Right ventricle myocardium inferior (tissue), 1 donor: ENCODE measurements at regions of chr3 and their contacts with region 1.

Region 1: DNA sequence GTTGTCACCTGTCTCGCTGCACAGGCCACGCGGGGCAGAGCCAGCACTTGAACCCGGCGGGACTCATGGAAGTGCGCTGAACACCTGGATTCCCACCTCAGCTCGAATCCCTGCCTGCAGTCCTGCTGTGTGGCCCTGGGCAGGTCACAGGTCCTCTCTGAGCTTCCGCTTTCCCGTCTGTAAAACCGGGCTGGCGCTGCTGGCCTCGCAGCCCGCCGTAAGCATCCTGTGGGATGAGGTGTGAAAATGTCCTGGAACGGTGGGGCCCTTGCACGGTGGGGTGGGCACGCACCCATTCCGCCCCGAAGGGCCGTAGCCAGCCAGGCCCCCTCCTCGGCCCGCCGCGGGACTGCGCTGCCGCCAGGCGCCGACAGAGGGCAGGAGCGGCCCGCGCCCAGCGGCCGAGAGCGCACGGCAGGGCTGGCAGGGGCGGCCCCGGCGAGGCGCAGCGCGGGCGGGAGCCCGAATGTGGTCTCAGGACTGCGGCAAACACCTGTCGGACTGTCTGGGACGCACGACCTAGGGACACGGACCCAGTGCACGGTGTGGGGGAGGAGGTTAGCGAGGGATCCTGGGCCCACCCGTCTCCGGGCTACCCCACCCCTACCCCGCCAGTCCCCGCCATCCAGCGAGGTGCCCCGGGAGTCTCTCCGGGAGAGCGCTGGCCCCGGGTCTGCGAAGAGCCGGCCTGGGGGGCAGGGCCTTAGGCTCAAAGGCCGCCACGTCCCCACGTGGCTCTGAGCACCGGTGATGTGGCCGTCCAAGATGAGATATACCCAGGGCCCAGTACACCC is 40.4 kb downstream of the DNAJB8 start:
- DNase-seq: peak; percentile 79
- ATAC-seq: peak; percentile 86

Region 2: GRCh38 chr3:128584412-128585020 is 158.2 kb after region 1 on chr3:
- intact Hi-C with region 1: loop called (anchors 5 kb)
- DNase-seq: peak; percentile 88
- ATAC-seq: peak; percentile 94